Activated CD4-positive, alpha-beta T cell treated with anti-CD3 and anti-CD28 coated beads for 36 hours (primary cell): ENCODE measurements at regions of chr12 and their contacts with region 1.

Region 1: DNA sequence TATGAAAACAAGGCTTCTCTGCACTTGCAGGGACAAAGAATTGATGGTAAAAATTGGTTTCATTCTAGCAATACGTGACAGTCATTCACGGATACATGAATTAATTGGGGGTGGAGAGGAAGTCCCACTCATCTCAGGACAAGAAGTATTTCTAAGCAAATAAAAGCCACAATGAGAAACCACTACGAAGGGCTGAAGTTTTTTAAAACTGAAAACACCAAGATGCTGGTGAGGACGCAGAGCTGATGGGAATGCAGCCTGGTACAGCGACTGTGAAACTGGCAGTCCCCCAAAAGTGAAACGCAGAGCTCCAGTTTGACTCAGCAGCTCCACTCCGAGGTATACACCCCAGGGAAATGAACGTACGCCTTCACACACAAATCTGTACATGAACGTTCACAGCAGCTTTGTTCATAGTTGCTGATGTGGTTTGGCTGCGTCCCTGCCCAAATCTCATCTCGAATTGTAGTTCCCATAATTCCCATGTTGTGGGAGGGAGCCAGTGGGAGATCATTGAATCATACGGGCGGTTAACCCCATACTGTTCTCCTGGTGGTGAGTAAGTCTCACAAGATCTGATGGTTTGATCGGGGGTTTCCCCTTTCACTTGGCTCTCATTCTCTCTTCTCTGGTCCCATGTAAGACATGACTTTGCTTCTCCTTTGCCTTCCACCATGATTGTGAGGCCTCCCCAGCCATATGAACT is 89.0 kb downstream of the SCARB1 start:
- DNase-seq: peak; percentile 92
- ATAC-seq: peak; percentile 89
- H3K4me3 Mint-ChIP-seq: peak overlapping the region; percentile 55
- H3K27ac Mint-ChIP-seq: peak overlapping the region; percentile 83
- H3K4me1 Mint-ChIP-seq: peaks cover 46% of the 10 kb centered on the region
- H3K27me3 Mint-ChIP-seq: peaks cover 12% of the 10 kb centered on the region

Region 2: DNA sequence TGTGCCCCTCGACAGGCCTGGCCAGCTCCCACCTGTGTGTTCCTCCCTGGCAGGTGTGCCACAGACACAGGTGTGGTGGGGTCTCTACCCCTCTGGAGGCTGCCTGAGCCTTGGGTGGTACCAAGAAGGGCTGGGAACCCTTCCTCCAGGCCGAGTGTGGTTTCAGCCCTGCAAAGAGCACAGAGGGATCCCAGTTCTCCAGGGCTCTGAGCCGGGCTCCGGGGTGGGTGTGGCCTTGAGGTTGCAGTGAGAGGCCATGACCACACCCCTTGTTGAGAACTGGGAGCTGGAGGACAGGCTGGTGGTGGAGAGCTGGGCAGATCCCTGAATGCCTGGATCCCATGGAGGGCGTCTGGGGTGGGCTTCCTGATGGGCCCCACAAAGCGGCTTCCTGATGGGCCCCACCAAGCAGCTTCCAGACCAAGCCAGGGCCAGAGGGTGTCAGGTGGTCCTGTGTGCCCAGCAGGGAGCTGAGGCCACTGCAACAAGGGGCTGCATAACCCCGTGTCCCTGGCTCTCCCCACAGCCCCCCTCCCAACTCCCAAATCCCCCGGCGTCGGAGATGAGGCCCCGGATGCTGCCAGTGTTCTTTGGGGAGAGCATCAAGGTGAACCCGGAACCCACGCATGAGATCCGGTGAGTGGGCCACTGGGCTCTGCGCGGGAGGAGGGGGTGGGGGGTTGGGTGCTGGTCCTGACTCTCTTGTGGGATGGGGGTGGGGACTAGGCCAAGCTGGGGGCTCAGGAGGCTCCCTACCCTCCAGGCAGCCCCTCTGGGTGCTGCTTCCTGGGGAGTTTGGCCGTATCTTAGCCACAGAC is 463.1 kb before region 1 on chr12:
- CTCF ChIA-PET with region 1: no interaction called
- POLR2A ChIA-PET with region 1: no interaction called
- intact Hi-C with region 1: no loop called
- DNase-seq: no peak
- ATAC-seq: no peak
- H3K4me3 Mint-ChIP-seq: no peak overlapping the region
- H3K27ac Mint-ChIP-seq: no peak overlapping the region
- H3K4me1 Mint-ChIP-seq: no peaks in the 10 kb centered on the region
- H3K27me3 Mint-ChIP-seq: no peaks in the 10 kb centered on the region

Region 3: DNA sequence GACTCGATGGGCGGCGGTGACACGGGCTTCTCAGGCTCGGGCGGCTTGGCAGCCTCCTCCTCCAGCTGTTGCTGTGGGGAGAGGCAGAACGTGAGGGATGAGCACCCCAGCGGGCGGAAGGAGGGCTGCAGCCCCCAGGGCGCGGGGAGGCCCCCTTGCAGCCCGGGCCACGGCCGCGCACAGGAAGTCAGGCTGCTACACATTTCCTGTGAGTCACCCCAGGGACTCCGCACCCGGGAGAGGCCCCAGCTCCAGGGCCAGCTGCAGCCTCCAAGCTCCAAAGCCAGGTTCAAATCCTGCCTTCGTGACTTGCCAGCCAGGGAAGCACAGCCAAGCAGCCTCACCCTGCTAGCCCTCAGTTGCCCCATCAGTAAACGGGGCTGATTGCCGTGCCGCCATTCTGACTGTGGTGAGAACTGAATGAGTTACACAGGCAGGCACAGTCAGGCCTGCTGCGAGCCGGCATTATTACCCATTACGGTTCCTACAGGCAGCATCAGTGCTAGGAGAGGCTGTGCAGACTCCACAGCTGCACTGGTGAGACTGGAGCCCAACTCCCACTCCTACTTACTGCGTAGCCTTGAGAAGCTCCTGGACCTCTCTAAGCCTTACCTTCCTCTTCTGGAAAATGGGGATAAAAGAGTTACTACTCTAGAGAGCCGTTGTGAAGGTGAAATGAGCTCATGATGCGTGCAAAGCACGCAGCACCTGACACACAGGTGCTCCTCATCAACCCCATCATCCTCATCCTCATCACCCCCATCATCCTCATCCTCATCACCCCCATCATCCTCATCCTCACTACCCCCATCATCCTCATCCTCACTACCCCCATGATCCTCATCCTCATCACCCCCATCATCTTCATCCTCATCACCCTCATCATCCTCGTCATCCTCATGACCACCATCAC is 308.1 kb before region 1 on chr12:
- CTCF ChIA-PET with region 1: interaction called, 6 read pairs
- POLR2A ChIA-PET with region 1: no interaction called
- intact Hi-C with region 1: loop called (anchors 1 kb)
- DNase-seq: peak; percentile 94
- ATAC-seq: peak; percentile 99
- H3K4me3 Mint-ChIP-seq: peak overlapping the region; percentile 61
- H3K27ac Mint-ChIP-seq: peak overlapping the region; percentile 74
- H3K4me1 Mint-ChIP-seq: peaks cover 34% of the 10 kb centered on the region
- H3K27me3 Mint-ChIP-seq: no peaks in the 10 kb centered on the region

Region 4: GRCh38 chr12:124609041-124609995 is 165.3 kb before region 1 on chr12:
- CTCF ChIA-PET with region 1: no interaction called
- POLR2A ChIA-PET with region 1: no interaction called
- intact Hi-C with region 1: no loop called
- DNase-seq: peak; percentile 88
- ATAC-seq: peak; percentile 90
- H3K4me3 Mint-ChIP-seq: peak overlapping the region; percentile 2
- H3K27ac Mint-ChIP-seq: peak overlapping the region; percentile 7
- H3K4me1 Mint-ChIP-seq: peaks cover 21% of the 10 kb centered on the region
- H3K27me3 Mint-ChIP-seq: no peaks in the 10 kb centered on the region

Region 5: DNA sequence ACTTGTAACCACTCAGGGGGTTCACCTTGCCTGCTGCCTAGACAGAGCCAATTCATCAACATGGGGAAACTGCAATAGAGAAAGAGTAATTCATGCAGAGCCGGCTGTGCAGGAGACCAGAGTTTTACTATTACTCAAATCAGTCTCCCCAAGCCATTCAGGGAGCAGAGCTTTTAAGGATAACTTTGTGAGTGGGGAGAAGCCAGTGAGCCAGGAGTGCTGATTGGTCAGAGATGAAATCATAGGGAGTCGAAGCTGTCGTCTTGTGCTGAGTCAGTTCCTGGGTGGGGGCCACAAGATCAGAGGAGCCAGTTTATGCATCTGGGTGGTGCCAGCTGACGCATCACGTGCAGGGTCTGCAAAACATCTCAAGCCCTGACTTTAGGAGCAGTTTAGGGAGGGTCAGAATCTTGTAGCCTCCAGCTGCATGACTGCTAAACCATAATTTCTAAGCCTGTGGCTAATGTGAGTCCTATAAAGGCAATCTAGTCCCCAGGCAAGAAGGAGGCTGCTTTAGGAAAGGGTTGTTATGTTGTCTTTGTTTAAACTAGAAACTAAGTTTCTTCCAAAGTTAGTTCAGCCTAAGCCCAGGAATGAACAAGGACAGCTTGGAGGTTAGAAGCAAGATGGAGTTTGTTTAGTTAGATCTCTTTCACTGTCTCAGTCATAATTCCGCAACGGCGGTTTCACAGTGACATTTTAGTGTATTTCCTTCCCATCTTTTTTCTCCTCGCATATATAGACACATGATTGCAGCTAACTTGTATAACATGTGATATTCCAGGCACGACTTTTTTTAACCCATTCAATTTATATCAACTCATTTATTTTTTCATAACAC is 138.3 kb before region 1 on chr12:
- CTCF ChIA-PET with region 1: interaction called, 3 read pairs
- POLR2A ChIA-PET with region 1: no interaction called
- intact Hi-C with region 1: loop called in 1 of 2 experiments (anchors 1 kb)
- DNase-seq: peak; percentile 83
- ATAC-seq: peak; percentile 85
- H3K4me3 Mint-ChIP-seq: no peak overlapping the region
- H3K27ac Mint-ChIP-seq: peak overlapping the region; percentile 30
- H3K4me1 Mint-ChIP-seq: peaks cover 16% of the 10 kb centered on the region
- H3K27me3 Mint-ChIP-seq: peaks cover 5% of the 10 kb centered on the region

Region 6: DNA sequence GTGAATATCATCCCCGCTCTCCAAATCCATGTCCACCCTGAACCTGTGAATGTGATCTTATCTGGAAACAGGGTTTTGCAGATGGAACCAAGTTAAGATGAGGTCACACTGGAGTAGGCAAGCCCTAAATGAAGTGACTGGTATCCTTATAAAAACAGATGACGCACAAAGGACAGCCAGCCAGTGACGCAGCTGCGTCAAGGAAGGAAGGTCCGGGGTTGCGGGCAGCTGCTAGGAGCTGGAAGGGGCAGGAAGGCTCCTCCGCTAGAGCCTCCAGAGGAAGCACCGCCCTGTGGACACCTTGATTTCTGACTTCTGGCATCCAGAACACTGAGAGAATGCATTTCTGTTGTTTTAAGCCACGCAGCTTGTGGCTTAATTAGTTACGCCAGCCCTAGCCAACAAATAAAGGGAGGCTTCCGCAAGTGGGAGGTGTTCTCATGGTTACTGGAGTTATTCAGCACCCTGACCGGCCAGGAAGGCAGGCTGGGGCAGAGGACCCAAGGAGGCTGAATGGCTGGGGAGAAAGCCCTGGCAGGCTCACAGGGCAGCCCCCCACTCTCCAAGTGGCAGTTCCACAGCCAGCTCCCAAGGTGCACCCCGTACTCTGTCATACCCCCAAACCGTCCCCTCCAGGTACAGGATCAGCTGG is 79.6 kb before region 1 on chr12:
- CTCF ChIA-PET with region 1: no interaction called
- POLR2A ChIA-PET with region 1: no interaction called
- intact Hi-C with region 1: no loop called
- DNase-seq: no peak
- ATAC-seq: no peak
- H3K4me3 Mint-ChIP-seq: no peak overlapping the region
- H3K27ac Mint-ChIP-seq: no peak overlapping the region
- H3K4me1 Mint-ChIP-seq: peaks cover 6% of the 10 kb centered on the region
- H3K27me3 Mint-ChIP-seq: no peaks in the 10 kb centered on the region

Region 7: DNA sequence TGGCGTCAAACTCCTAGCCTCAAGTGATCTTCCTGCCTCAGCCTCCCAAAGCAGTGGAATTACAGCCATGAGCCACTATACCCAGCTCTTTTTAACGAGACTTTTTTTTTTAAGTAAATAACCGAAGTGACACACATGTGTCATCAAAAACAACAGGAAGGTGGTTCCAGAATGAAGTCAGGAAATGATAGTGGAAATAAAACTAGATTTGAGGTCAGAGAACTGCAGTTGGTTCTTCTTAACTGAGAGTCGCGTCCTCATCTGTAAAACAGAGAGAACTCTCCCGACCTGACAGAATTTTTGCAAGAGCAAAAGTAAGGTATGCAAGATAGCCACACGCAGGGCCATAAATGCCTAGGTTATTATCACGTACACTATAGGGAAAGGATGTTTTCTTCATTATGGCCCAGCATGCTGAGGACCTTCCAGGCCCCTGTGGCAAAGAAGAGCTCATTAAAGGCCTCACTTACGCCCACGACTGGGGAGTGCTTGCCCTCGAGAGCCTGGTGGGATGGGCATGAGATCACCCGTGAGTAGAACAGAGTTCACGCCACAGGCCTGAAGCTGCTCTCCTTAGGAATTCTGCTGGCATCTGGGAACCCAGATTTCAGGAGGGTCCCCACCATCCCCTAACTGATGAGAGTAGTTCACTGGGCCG is 21.8 kb after region 1 on chr12:
- CTCF ChIA-PET with region 1: interaction called, 3 read pairs
- POLR2A ChIA-PET with region 1: no interaction called
- intact Hi-C with region 1: loop called (anchors 1 kb)
- DNase-seq: peak; percentile 37
- ATAC-seq: peak; percentile 86
- H3K4me3 Mint-ChIP-seq: no peak overlapping the region
- H3K27ac Mint-ChIP-seq: peak overlapping the region; percentile 79
- H3K4me1 Mint-ChIP-seq: peaks cover 24% of the 10 kb centered on the region
- H3K27me3 Mint-ChIP-seq: no peaks in the 10 kb centered on the region

Region 8: DNA sequence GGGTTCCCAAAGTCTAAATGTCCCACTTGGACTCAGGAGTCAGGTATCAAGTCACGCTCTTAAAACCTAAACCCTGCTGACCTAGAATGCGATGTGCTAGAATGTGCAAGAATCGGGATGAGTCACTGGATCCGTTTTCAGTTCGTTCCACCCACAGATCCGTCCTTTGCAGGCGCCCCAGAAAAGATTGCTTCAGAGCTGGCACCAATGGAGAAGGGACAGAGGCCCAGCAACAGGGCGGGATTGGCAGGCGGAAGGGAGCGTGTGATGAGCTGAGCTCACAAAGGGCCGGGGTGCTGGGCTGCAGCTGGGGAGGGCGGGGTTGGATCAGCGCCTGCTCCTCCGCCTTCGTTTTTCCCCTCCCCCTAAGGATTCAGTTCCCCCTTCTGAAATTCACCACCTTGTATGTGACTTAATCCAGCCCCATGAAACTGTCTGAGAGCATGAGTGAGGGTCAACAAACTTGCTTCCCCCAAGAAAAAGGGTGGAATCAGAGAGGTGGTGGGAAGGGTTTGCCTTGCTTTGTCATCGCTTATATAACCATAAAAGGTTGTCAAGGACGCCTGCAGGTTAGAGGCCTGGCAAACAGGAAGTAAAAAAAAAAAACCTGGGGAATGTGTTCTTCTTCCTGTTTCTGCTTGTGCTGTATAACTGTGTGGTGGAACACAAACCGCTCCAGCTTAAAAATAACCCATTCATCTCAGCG is 142.7 kb after region 1 on chr12:
- CTCF ChIA-PET with region 1: no interaction called
- POLR2A ChIA-PET with region 1: interaction called, 6 read pairs
- intact Hi-C with region 1: loop called (anchors 1 kb)
- DNase-seq: peak; percentile 97
- ATAC-seq: peak; percentile 69
- H3K4me3 Mint-ChIP-seq: peak overlapping the region; percentile 100
- H3K27ac Mint-ChIP-seq: peak overlapping the region; percentile 100
- H3K4me1 Mint-ChIP-seq: peaks cover 86% of the 10 kb centered on the region
- H3K27me3 Mint-ChIP-seq: no peaks in the 10 kb centered on the region